PC-9 (cell line): ENCODE measurements at regions of chr2 and their contacts with region 1.

Region 1: DNA sequence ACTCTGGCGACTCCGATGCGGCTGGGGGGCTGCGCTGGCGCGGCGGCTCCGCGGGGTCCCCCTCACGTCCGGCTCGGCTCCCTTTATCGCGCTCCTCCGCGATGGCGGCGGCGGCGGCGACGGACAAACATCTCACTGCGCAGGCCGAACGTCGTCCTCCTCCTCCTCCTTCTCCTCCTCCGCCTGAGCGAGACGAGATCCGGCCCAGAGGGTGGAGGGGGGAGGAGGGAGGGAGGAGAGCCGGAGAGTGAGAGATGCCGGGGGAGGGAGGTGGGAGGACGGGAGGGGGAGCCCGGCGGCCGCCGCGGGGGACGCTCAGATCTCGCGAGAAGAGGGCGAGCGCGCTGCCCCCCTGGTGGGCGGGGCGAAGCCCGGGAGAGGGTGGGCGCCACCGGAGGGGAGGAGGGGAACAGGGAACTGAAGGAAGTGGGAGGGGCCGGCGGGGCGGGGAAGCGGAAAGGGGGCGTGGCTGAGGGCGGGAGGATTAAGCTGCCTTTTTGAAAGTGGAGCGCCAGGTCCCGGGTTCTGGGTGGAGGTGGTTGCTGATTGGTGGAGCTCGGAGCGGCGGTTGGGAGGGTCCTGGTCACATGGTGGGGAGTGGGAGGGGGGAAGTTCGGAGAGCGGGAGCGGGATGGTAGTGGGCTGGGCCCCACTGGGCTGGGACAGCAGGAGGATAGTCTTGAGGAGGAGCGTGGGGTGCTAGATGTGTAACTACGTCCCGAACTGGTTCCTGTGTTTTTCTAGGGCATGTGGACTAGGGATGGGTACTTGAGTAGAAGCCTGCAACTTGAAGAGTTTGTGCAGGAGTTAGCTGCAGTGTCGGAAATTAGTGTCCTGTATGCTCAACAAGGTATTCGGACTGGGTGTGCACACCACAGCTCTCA is at the start of gene CUL3:
- DNase-seq: peak; percentile 97 to 100
- H3K4me3 ChIP-seq: peak within 1 kb of the TSS; percentile 67
- H3K27ac ChIP-seq: peak within 1 kb of the TSS; percentile 46
- H3K4me1 ChIP-seq: peaks cover 39% of the 10 kb centered on the region
- H3K27me3 ChIP-seq: no peaks in the 10 kb centered on the region
- CTCF ChIP-seq: no peak
- total RNA-seq, gene CUL3: 155 and 200 TPM in 2 replicates

Region 2: DNA sequence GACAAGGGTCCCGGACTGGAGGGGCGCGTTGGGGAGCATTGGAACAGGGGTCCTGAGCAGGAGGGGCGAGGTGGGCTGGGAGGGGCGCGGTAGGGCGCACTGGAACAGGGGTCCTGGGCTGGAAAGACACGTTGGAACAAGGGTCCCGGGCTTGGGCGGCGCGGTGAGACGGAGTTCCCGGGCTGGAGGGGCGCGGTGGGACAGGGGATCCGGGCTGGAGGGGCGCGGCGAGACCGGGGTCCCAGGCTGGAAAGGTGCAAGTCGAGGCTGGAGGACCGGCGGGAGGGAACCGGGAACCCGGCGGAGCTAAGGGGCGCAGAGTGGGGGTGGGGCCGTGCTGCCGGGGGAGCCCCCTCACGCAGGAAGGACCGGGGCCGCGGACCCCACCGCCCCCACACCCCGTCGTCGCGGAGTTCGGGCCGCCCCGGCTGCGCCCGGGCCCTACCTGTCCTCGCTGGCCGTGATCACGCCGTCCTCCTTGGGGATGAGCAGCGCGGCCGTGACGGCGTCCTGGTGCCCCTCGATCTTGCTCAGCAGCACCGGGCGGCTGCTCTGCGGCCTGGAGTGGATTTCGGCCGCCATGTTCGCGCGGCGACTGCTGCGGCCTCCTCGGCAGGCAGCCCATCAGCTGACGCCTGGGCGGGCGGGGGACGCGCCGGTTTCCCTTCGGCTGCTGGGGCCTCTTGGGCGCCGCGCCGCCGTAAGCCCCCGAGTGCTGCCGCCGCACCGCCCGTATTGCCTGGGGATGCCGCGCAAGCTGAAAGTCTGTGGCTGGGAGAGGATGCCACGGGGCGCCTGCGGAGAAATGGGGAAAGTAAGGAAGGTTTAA is 640.5 kb before region 1 on chr2 and contains the start of gene WDFY1:
- CTCF ChIA-PET with region 1: no interaction called
- POLR2A ChIA-PET with region 1: no interaction called
- intact Hi-C with region 1: loop called (anchors 10 kb)
- DNase-seq: peak; percentile 77 to 94
- H3K4me3 ChIP-seq: peak within 1 kb of the TSS; percentile 74
- H3K27ac ChIP-seq: 0 out of 2 replicates have a peak within 1 kb of the TSS, but pooled peaks have one; percentile 1
- H3K4me1 ChIP-seq: peaks cover 42% of the 10 kb centered on the region
- H3K27me3 ChIP-seq: no peaks in the 10 kb centered on the region
- CTCF ChIP-seq: no peak
- total RNA-seq, gene WDFY1: 81.9 and 84.4 TPM in 2 replicates

Region 3: DNA sequence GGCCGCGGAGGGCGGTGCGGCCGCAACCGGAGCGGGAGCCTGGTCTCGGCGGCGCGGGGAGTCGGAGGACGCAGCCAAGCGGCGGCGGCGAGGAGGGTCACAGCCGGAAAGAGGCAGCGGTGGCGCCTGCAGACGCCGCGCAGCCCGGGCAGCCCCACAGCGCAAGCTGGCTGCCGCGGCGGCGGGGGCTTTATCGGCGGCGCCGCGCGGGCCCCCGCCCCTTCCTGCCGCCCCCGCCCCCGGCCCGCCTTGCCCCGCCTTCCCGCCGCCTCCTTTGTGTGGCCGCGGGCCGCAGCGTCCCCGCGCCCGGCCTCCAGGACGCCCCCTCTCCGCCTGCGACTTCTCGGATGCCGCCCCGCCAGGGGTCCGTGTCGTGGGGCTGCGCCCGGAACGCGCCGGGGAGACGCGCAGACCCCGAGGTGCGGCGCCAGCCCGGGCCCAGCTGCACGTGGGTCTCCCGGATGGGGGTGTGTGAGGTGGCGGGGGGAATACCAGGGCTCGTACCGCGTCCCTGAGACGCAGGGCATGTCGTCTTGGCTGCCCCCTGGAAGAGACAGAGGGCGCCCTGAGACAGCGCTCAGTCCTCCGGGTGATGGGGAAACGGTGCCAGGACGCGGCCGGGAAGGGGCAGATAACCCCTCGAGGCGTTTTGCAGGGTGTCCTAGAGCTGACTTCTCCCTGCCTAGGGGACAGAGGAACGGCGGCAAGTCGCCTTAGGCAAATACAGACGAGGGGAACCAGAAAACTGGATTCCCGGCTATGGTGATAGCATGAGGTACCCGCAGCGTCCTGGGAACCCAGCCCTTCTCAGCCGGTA is 546.1 kb before region 1 on chr2 and contains the start of gene SERPINE2:
- CTCF ChIA-PET with region 1: no interaction called
- POLR2A ChIA-PET with region 1: no interaction called
- intact Hi-C with region 1: no loop called
- DNase-seq: peak; percentile 67 to 91
- H3K4me3 ChIP-seq: peak within 1 kb of the TSS; percentile 57
- H3K27ac ChIP-seq: no peak within 1 kb of the TSS
- H3K4me1 ChIP-seq: peaks cover 20% of the 10 kb centered on the region
- H3K27me3 ChIP-seq: no peaks in the 10 kb centered on the region
- CTCF ChIP-seq: peak; percentile 77
- total RNA-seq, gene SERPINE2: 110 and 155 TPM in 2 replicates

Region 4: GRCh38 chr2:224442071-224442967 is 143.1 kb before region 1 on chr2:
- CTCF ChIA-PET with region 1: no interaction called
- POLR2A ChIA-PET with region 1: interaction called, 13 read pairs
- intact Hi-C with region 1: no loop called
- DNase-seq: peak in 1 of 2 experiments; percentile 54
- H3K4me3 ChIP-seq: peak overlapping the region; percentile 55
- H3K27ac ChIP-seq: no peak overlapping the region
- H3K4me1 ChIP-seq: peaks cover 19% of the 10 kb centered on the region
- H3K27me3 ChIP-seq: no peaks in the 10 kb centered on the region
- CTCF ChIP-seq: no peak

Region 5: DNA sequence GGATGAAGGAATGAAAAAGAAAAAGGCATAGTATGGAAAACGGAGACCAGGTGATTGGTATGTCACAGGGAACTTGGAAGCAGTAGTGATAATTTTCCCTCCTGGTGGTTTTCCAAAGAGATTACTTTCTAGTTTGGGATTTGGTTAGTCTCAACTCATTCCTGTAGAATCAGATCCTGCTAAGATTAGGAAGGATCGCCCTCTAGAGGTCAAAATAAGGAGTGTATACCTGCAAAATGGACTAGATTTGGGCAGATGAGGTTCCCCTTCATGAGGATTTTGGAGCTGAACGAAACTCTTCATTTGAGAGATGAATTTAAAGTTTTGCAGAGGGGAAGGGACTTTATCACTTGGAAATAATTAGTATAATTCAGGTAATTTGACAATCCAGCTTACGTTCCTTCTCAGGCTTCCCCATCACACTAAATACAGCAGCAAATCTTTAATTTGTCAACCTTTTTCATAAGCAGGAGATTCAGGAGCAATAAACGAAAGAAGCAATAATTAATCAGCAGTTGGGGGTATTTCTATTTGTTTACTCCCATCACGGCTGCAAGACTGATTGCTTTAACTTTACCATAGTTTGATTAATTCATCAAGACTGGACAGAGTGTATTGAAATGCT is 65.5 kb after region 1 on chr2:
- CTCF ChIA-PET with region 1: interaction called, 12 read pairs
- POLR2A ChIA-PET with region 1: interaction called, 3 read pairs
- intact Hi-C with region 1: loop called (anchors 2 kb)
- DNase-seq: peak; percentile 43 to 75
- H3K4me3 ChIP-seq: no peak overlapping the region
- H3K27ac ChIP-seq: no peak overlapping the region
- H3K4me1 ChIP-seq: peaks cover 6% of the 10 kb centered on the region
- H3K27me3 ChIP-seq: no peaks in the 10 kb centered on the region
- CTCF ChIP-seq: peak; percentile 100

Region 6: DNA sequence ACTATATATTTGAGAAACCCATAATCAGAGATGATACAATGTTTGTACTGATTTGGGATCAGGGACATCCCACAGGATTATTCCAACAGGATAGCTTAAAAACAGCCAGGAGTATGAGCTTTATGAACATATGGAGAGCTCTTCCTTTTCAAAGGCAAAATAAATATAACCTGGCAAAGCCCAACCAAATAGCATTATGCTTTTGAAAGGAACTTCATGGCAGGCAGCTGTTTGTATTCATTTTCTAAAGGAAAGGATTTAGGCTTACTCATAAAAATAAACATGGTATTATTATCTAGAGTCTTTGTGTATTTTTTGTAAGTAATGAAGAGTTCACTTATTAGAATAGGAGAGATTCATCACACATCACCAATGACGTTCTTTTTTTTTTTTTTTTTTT is 86.3 kb after region 1 on chr2:
- CTCF ChIA-PET with region 1: no interaction called
- POLR2A ChIA-PET with region 1: no interaction called
- intact Hi-C with region 1: no loop called
- DNase-seq: no peak
- H3K4me3 ChIP-seq: no peak overlapping the region
- H3K27ac ChIP-seq: no peak overlapping the region
- H3K4me1 ChIP-seq: no peaks in the 10 kb centered on the region
- H3K27me3 ChIP-seq: no peaks in the 10 kb centered on the region
- CTCF ChIP-seq: no peak

Region 7: GRCh38 chr2:224723586-224724217 is 138.3 kb after region 1 on chr2:
- CTCF ChIA-PET with region 1: no interaction called
- POLR2A ChIA-PET with region 1: no interaction called
- intact Hi-C with region 1: no loop called
- DNase-seq: no peak
- H3K4me3 ChIP-seq: no peak overlapping the region
- H3K27ac ChIP-seq: no peak overlapping the region
- H3K4me1 ChIP-seq: no peaks in the 10 kb centered on the region
- H3K27me3 ChIP-seq: no peaks in the 10 kb centered on the region
- CTCF ChIP-seq: no peak

Region 8: DNA sequence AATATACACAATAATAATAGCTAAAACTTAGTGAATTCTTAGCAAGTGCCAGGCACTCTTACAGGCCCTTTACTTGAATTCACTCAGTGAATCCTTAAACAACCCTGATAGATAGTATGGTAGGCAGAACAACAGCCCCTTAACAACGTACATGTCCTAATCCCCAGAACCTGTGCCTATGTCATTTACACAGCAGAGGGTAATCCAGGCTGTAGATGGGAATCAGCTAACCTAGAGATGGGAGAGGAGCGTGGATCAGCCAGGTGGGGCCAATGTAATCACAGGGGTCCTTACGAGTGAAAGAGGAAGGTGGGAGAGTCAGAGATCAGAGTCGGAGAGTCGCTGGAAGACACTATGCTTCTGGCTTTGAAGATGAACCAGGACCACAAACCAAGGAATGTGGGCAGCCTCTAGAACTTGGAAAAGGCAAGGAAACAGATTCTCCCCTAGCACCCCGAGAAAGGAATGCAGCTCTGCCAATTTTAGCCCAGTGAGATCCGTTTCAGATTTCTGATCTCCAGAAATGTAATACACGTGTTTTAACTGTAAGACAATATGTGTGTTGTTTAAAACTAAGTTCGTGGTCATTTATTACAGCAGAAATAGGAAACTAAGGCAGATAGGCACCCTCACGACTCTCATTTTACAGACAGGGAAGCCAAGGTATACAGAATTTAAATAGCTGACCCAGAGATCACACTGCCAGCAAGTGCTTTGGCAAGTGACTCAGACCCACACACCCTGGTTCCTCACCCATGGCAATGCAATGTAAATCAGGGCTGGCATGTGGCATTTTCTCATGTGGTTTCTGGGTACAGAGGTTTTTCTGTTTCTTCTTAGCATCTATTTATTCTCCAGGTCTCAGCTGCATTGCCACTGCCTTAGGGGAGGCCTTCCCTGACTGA is 387.9 kb after region 1 on chr2:
- CTCF ChIA-PET with region 1: no interaction called
- POLR2A ChIA-PET with region 1: no interaction called
- intact Hi-C with region 1: loop called (anchors 5 kb)
- DNase-seq: peak in 1 of 2 experiments; percentile 73
- H3K4me3 ChIP-seq: no peak overlapping the region
- H3K27ac ChIP-seq: no peak overlapping the region
- H3K4me1 ChIP-seq: peaks cover 31% of the 10 kb centered on the region
- H3K27me3 ChIP-seq: no peaks in the 10 kb centered on the region
- CTCF ChIP-seq: no peak